GM12878 (cell line): ENCODE measurements at regions of chr6 and their contacts with region 1.

Region 1: DNA sequence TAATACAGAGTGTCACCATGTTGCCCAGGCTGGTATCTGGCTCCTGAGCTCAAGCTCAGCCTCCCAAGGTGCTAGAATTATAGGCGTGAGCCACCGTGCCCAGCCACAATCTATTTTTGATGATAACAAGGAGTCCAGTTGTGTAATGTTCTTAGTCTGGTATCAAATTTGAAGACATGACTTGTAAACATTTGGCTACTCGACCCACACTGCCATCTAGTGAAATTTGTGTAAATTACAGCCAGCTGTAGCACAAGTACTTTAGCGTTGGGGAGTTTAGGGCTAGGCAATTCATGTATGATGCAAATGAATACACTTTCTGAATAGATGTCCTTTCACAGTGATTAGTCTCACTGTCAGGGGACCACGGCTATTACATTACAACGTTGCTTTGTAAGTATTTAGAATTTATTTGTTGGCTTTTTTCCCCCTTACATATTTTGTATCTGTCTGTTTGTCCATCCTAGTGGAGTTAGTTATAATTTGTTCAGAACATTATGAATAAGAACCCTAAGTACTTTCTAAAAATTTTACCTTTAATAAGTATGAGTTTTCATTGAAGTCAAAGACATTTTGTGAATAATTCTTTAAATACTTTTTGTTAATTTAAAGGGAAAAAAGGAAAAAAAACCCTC is 139.7 kb downstream of the PRDM13 start:
- DNase-seq: peak; percentile 20
- ATAC-seq: peak; percentile 92
- H3K4me3 ChIP-seq: no peak overlapping the region
- H3K27ac ChIP-seq: no peak overlapping the region
- H3K4me1 ChIP-seq: no peaks in the 10 kb centered on the region
- H3K27me3 ChIP-seq: no peaks in the 10 kb centered on the region
- CTCF ChIP-seq: peak; percentile 75 to 88 (median 83); a peak in 5 of 6 replicates
- EP300 ChIP-seq: no peak
- POLR2A ChIP-seq: no peak
- RAD21 ChIP-seq: peak; percentile 87

Region 2: GRCh38 chr6:99434702-99435530 is 311.5 kb before region 1 on chr6:
- CTCF ChIA-PET with region 1: interaction called, 26 read pairs
- POLR2A ChIA-PET with region 1: no interaction called
- RAD21 ChIA-PET with region 1: no interaction called
- SMC1A ChIA-PET with region 1: interaction called, 8 read pairs
- in situ Hi-C with region 1: no loop called
- intact Hi-C with region 1: no loop called
- DNase-seq: no peak
- ATAC-seq: peak; percentile 92
- H3K4me3 ChIP-seq: no peak overlapping the region
- H3K27ac ChIP-seq: no peak overlapping the region
- H3K4me1 ChIP-seq: no peaks in the 10 kb centered on the region
- H3K27me3 ChIP-seq: no peaks in the 10 kb centered on the region
- CTCF ChIP-seq: peak in 2 of 3 experiments; percentile 38 to 43; a peak in 4 of 6 replicates
- EP300 ChIP-seq: no peak
- POLR2A ChIP-seq: no peak
- RAD21 ChIP-seq: no peak

Region 3: GRCh38 chr6:99467509-99468106 is 278.8 kb before region 1 on chr6:
- CTCF ChIA-PET with region 1: interaction called, 56 read pairs
- POLR2A ChIA-PET with region 1: no interaction called
- RAD21 ChIA-PET with region 1: interaction called, 35 read pairs
- SMC1A ChIA-PET with region 1: interaction called, 56 read pairs
- in situ Hi-C with region 1: loop called (anchors 5 kb)
- intact Hi-C with region 1: loop called (anchors 1 kb)
- DNase-seq: no peak
- ATAC-seq: peak; percentile 64
- H3K4me3 ChIP-seq: no peak overlapping the region
- H3K27ac ChIP-seq: no peak overlapping the region
- H3K4me1 ChIP-seq: no peaks in the 10 kb centered on the region
- H3K27me3 ChIP-seq: no peaks in the 10 kb centered on the region
- CTCF ChIP-seq: peak; percentile 51 to 71 (median 56)
- EP300 ChIP-seq: no peak
- POLR2A ChIP-seq: no peak
- RAD21 ChIP-seq: peak; percentile 92

Region 4: GRCh38 chr6:99588618-99589289 is 157.6 kb before region 1 on chr6:
- CTCF ChIA-PET with region 1: interaction called, 34 read pairs
- POLR2A ChIA-PET with region 1: no interaction called
- RAD21 ChIA-PET with region 1: interaction called, 34 read pairs
- SMC1A ChIA-PET with region 1: interaction called, 12 read pairs
- in situ Hi-C with region 1: no loop called
- intact Hi-C with region 1: loop called (anchors 1 kb)
- DNase-seq: no peak
- ATAC-seq: peak; percentile 94
- H3K4me3 ChIP-seq: peak overlapping the region; percentile 74
- H3K27ac ChIP-seq: no peak overlapping the region
- H3K4me1 ChIP-seq: no peaks in the 10 kb centered on the region
- H3K27me3 ChIP-seq: peaks cover 12 to 16% of the 10 kb centered on the region in 2 experiments
- CTCF ChIP-seq: peak; percentile 67 to 78 (median 74); a peak in 5 of 6 replicates
- EP300 ChIP-seq: no peak
- POLR2A ChIP-seq: no peak
- RAD21 ChIP-seq: peak; percentile 85

Region 5: DNA sequence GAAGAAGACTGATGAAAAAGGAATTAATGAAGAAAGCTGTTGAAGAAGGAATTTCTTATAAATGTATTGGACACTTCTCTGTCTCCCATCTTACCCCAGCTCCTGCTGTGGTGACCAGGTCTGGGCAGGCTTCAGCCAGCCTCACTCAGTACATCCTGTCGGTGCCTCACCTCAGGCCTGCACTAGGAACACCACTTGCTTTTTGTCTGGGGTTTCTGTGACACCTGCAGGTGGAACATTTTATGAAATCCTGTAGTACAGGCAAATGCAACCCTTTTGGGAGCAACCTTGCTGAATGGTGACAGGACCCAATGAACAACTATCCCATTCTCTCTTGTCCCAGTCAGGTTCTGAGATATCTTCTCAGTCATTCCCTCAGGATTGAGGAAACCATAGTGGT is 10.1 kb before region 1 on chr6:
- CTCF ChIA-PET with region 1: interaction called, 19 read pairs
- POLR2A ChIA-PET with region 1: interaction called, 4 read pairs
- RAD21 ChIA-PET with region 1: no interaction called
- SMC1A ChIA-PET with region 1: interaction called, 3 read pairs
- in situ Hi-C with region 1: no loop called
- intact Hi-C with region 1: no loop called
- DNase-seq: no peak
- ATAC-seq: 0 out of 3 replicates have a peak, but pooled peaks have one; percentile 30
- H3K4me3 ChIP-seq: no peak overlapping the region
- H3K27ac ChIP-seq: no peak overlapping the region
- H3K4me1 ChIP-seq: no peaks in the 10 kb centered on the region
- H3K27me3 ChIP-seq: no peaks in the 10 kb centered on the region
- CTCF ChIP-seq: peak in 1 of 3 experiments; percentile 15; a peak in 1 of 6 replicates
- EP300 ChIP-seq: no peak
- POLR2A ChIP-seq: no peak
- RAD21 ChIP-seq: no peak

Region 6: GRCh38 chr6:99761711-99762110 is 15.3 kb after region 1 on chr6:
- CTCF ChIA-PET with region 1: interaction called, 13 read pairs
- POLR2A ChIA-PET with region 1: no interaction called
- RAD21 ChIA-PET with region 1: no interaction called
- SMC1A ChIA-PET with region 1: no interaction called
- in situ Hi-C with region 1: no loop called
- intact Hi-C with region 1: no loop called
- DNase-seq: no peak
- ATAC-seq: no peak
- H3K4me3 ChIP-seq: no peak overlapping the region
- H3K27ac ChIP-seq: no peak overlapping the region
- H3K4me1 ChIP-seq: no peaks in the 10 kb centered on the region
- H3K27me3 ChIP-seq: no peaks in the 10 kb centered on the region
- CTCF ChIP-seq: no peak
- EP300 ChIP-seq: no peak
- POLR2A ChIP-seq: no peak
- RAD21 ChIP-seq: no peak